HEK293T (cell line): ENCODE measurements at regions of chr19 and their contacts with region 1.

Region 1: GRCh38 chr19:1875646-1876495 is 9.4 kb downstream of the ABHD17A start:
- DNase-seq: peak; percentile 88

Region 2: DNA sequence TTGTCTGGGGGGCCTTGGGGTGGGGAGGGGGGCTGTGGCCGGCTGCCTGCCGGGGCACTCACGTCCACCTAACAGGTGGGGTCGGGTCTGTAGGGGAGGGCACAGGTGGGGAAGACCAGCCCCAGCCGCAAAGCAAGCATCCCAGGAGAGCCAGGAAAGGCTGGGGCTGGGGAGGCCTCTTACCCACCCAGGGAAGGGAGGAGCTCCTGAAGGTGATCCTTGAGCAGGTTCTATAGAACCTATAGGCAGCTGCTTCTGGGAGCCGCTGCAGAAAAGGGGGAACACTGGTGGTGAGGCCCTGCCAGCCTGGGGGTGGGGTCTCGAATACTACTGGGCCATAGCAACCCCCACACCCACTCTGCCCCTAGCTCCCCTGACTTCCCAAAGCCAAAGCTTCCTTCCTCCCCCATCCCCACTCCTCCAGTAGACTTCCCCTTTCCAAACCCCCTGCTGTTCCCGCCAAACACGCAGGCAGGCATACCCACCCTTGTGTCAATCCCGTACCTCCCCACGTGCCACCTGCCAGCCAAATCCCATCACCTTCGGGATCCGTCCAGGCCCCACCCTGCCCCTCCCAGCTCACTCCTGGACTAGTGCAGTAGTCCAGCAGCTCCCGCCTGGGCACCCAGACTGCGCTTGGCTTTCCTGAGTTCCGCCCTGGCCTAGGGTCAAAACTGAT is 18.1 kb before region 1 on chr19:
- CTCF ChIA-PET with region 1: no interaction called
- POLR2A ChIA-PET with region 1: interaction called, 11 read pairs
- DNase-seq: no peak

Region 3: GRCh38 chr19:1863726-1864480 is 12.0 kb before region 1 on chr19:
- CTCF ChIA-PET with region 1: no interaction called
- POLR2A ChIA-PET with region 1: interaction called, 17 read pairs
- DNase-seq: peak; percentile 92

Region 4: DNA sequence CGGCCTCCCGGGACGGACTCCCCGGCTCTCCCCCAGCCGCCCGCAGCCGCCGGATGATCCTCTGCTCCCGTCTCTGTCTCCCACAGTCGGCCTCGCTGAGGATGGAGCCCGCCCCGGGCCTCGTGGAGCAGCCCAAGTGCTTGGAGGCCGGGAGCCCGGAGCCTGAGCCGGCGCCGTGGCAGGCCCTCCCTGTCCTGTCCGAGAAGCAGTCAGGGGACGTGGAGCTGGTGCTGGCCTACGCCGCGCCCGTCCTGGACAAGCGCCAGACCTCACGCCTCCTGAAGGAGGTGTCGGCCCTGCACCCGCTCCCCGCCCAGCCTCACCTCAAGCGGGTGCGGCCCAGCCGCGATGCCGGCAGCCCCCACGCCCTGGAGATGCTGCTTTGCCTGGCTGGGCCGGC is 36.1 kb after region 1 on chr19:
- CTCF ChIA-PET with region 1: no interaction called
- POLR2A ChIA-PET with region 1: no interaction called
- DNase-seq: no peak